Heart right ventricle (tissue), 16 donors: ENCODE measurements at regions of chr13 and their contacts with region 1.

Region 1: DNA sequence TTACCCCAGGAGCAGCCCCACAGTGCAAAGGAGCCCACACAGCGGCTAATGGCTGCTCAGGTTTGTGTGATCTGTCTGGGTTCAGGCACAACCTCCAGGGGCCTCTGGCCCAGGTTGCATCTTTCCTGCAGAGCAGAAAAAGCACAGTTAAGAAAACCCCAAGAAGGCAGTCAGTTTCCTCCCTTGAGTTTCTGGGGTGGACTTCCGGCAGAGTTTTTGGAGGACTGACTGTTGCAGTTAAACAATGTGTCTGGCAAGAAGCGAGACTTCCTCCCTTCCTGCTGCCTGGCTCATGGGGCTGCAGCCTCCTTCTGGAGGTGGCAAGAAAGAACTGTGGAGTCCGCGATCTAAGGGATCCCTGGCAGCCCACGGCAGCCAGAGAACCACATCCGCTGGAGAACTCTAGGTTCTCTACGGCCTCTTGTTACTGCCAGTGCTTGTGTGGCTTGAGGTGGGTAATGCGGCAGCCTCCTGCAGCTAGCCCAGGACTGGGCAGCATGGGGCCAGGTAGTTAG is 114.4 kb downstream of the ZDHHC20 start:
- DNase-seq: no peak
- ATAC-seq: peak in 3 of 8 donors; percentile 33 to 35 (median 33)
- H3K4me3 ChIP-seq: peak overlapping the region in 1 of 10 donors; percentile 18
- H3K27ac ChIP-seq: peak overlapping the region in 2 of 10 donors; percentile 9 to 62
- H3K4me1 ChIP-seq: peaks cover 0 to 14% (median 0%) of the 10 kb centered on the region in 9 donors
- H3K27me3 ChIP-seq: no peaks in the 10 kb centered on the region
- CTCF ChIP-seq: no peak

Region 2: DNA sequence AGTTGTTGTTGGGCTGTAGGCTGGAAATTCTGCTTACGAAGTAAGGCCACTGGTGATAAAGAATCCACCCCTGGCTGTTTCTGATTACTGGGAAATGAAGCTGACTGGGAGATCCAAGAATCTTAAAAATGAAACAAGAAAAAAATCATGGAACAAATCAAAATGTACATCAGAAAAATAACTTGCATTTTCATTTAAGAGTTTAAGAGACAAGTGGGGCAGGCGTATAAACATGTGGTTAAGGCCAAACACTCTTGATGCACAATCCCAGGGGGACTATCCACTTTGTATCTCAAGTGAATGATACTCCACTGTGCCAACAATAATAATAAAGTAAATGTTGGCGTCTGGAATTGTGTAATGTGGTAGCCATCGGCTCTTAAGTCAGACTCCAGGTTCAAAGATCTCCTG is 1505.8 kb before region 1 on chr13:
- intact Hi-C with region 1: no loop called
- DNase-seq: no peak
- ATAC-seq: peak in 3 of 8 donors; percentile 24 to 61 (median 58)
- H3K4me3 ChIP-seq: no peak overlapping the region
- H3K27ac ChIP-seq: peak overlapping the region in 1 of 10 donors; percentile 2
- H3K4me1 ChIP-seq: peaks cover 0 to 18% (median 12%) of the 10 kb centered on the region in 9 donors
- H3K27me3 ChIP-seq: no peaks in the 10 kb centered on the region
- CTCF ChIP-seq: no peak

Region 3: GRCh38 chr13:21355304-21355703 is 10.6 kb after region 1 on chr13:
- intact Hi-C with region 1: loop called in 1 of 10 experiments (anchors 1 kb)
- DNase-seq: no peak
- ATAC-seq: no peak
- H3K4me3 ChIP-seq: no peak overlapping the region
- H3K27ac ChIP-seq: no peak overlapping the region
- H3K4me1 ChIP-seq: no peaks in the 10 kb centered on the region
- H3K27me3 ChIP-seq: no peaks in the 10 kb centered on the region
- CTCF ChIP-seq: no peak

Region 4: DNA sequence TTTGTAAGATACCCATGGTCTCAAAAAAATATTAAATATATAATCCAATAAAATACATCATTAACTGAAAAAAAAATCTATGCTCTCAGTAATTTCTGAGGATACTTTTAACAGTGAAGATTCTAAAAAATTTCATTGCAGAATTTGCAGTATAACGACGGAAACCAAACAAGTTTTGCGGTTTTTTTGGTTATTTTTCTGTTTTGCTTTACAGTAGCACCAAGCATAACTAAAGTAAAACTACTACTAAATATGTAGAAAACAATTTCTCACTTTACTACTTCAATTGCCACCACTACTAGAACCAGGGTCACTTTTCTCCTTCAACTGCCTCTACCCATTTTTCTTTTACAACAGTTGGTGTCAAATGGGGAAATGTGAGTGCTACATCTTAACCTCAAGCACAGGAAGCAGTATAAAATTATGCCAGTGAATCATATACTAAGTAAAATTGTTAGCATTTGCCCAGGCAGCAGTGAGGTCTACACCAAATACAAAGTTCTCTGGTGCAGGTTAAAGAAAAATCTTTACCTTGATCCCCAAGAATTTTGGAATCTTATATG is 235.1 kb after region 1 on chr13:
- intact Hi-C with region 1: no loop called
- DNase-seq: no peak
- ATAC-seq: no peak
- H3K4me3 ChIP-seq: no peak overlapping the region
- H3K27ac ChIP-seq: no peak overlapping the region
- H3K4me1 ChIP-seq: peaks cover 0 to 21% (median 0%) of the 10 kb centered on the region in 9 donors
- H3K27me3 ChIP-seq: no peaks in the 10 kb centered on the region
- CTCF ChIP-seq: no peak